Calu3 (cell line): ENCODE measurements at regions of chr12 and their contacts with region 1.

Region 1: GRCh38 chr12:110444455-110444854 is 5.7 kb downstream of the ARPC3 start:
- DNase-seq: no peak
- H3K4me3 Mint-ChIP-seq: no peak overlapping the region
- H3K27ac Mint-ChIP-seq: no peak overlapping the region
- H3K4me1 Mint-ChIP-seq: no peaks in the 10 kb centered on the region
- H3K27me3 Mint-ChIP-seq: no peaks in the 10 kb centered on the region
- CTCF ChIP-seq: no peak

Region 2: DNA sequence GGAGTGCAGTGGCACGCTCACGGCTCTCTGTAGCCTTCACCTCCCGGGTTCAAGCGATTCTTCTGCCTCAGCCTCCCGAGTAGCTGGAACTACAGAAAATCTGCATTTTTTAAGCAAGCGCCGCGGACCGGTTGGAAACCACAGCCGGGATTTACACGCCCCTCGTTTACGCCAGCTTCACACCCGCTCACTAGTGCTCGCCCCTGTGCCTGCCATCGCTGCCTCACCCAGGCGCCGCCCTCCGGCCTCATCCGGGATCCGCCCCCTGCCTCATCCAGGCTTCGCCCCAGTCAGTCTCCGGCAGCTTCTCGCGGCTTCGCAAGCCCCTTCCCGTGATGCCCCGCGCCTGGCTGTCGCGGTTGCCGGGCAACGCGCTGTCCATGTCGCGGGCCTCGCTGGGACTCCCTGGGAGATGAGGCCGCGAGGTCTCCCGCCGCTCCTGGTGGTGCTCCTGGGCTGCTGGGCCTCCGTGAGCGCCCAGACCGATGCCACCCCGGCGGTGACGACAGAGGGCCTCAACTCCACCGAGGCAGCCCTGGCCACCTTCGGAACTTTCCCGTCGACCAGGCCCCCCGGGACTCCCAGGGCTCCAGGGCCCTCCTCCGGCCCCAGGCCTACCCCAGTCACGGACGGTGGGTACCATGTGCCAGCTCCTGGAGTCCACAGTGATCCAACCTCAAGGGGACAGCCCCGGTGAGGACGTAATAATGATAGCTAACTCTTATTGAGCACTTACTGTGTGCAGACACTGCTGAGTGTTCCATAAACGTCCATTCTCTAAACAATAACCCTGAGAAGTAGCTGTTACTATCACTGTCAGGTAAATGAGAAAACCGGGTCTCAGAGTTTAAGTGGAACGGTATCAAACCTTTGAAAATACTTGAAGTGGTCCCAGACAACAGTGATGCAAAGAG is 169.6 kb after region 1 on chr12 and contains the start of gene TCTN1:
- CTCF ChIA-PET with region 1: interaction called, 13 read pairs
- intact Hi-C with region 1: no loop called
- DNase-seq: peak; percentile 99
- H3K4me3 Mint-ChIP-seq: peak within 1 kb of the TSS; percentile 82
- H3K27ac Mint-ChIP-seq: peak within 1 kb of the TSS; percentile 42
- H3K4me1 Mint-ChIP-seq: peaks cover 10% of the 10 kb centered on the region
- H3K27me3 Mint-ChIP-seq: no peaks in the 10 kb centered on the region
- CTCF ChIP-seq: no peak
- total RNA-seq, gene TCTN1: 41.0 and 41.8 TPM in 2 replicates